ENCODE measurements at regions of chr10 and their contacts with region 1.

Region 1: GRCh38 chr10:35642027-35642792 is at the start of gene FZD8:
- DNase-seq: peak; percentile 53 to 95 (median 89)
- H3K4me3 ChIP-seq: peak within 1 kb of the TSS; percentile 56 to 94 (median 78)
- H3K27ac ChIP-seq: peak within 1 kb of the TSS in 49 of 59 donors; percentile 1 to 85 (median 60)
- H3K27me3 ChIP-seq: no peaks in the 10 kb centered on the region
- CTCF ChIP-seq: peak in 33 of 56 donors; percentile 5 to 57 (median 29)
- total RNA-seq, gene FZD8: 3.4 to 36.8 (median 7.2) TPM

Region 2: DNA sequence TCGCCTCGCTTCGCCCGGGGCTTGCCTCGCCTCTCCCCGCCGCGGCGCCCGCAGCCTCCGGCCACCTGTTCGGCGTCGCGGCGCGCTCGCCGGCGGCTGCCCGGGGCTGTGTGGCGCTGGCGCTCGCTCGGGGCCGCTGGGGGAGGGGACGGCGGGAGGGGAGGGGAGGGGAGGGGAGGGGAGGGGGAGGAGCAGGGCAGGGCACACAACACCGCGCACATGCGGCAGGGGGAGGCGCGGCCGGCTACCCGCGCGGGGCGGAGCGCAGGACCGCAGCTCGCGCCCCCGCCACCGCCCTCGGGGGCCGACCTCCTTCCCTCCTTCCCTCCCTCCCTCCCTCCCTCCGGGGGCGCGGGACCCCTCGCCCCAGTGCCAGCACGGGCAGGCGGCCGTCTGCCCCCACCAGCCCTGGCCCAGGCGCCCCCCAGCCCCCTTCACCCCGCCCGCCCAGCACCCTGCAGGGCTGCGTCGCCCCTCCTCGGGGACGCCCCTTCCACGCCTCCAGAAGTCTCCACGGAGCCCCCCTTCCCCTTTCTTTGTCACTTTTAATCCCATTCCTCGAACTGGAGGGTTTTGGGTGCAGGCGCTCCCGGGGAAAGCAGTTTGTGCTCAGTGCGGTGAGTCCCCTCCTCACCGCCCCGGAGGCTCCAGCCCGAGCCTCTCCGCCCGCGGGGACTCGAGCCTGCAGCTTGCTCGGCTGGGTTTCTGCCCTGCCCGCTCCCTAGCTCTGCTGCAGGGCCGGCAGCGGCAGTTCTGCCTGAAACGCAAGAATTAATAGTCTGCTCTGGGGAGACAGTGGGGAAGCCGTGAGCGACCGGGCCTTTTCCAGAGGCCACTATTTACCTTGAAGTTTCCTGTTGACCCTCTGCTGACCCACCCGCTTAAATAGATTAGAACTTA is 826.8 kb before region 1 on chr10 and contains the start of gene PARD3:
- intact Hi-C with region 1: loop called in 1 of 2 experiments (anchors 5 kb)
- DNase-seq: peak in 1 of 10 donors; percentile 15
- H3K4me3 ChIP-seq: peak within 1 kb of the TSS; percentile 40 to 79 (median 63)
- H3K27ac ChIP-seq: peak within 1 kb of the TSS in 44 of 59 donors; percentile 1 to 87 (median 68)
- H3K27me3 ChIP-seq: peaks cover 0 to 84% (median 27%) of the 10 kb centered on the region in 45 donors
- CTCF ChIP-seq: no peak
- total RNA-seq, gene PARD3: 8.9 to 47.8 (median 19.1) TPM

Region 3: DNA sequence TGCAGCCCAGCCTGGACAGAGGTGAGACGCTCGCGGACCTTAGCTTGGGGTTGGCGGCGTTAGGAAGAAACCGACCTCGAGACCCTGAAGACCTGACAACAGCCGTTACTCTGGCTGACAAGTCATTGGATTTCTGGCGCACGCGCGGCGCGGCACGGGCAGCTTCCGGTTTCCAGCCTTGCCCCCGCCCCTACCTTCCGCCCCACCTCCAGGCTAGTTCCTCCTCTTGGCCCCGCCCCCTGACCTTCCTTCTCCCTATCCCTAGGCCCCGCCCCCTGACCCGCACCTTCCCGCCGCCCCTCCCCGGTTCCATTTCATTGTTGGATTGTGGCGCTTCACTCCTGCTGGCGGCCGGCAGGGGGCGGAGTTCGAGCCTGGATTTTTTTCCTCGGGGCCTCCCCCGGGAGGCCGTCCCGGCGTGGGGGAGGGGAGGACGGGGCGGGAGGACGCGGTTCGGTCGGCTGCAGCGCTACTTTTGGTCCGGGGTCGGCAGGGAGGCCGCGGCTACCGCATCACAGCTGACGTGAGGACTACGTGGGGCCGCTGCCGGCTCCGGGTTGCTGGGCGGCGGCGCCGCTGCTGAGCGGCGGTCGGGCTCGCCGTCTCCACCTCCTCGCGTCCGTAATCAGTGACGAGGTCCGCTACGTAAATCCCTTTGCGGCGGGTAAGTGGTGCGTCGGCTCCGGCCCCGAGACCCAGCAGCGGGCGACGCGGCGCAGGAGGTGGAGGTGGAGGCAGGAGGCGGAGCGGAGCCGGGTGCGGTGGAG is 515.5 kb before region 1 on chr10 and contains the start of gene CREM:
- intact Hi-C with region 1: loop called (anchors 5 to 10 kb)
- DNase-seq: peak; percentile 91 to 98 (median 96)
- H3K4me3 ChIP-seq: peak within 1 kb of the TSS; percentile 65 to 93 (median 86)
- H3K27ac ChIP-seq: peak within 1 kb of the TSS; percentile 88 to 100 (median 98)
- H3K27me3 ChIP-seq: no peaks in the 10 kb centered on the region
- CTCF ChIP-seq: peak; percentile 58 to 96 (median 84)
- total RNA-seq, gene CREM: 20.4 to 57.0 (median 37.2) TPM

Region 4: GRCh38 chr10:35236739-35237138 is 405.5 kb before region 1 on chr10:
- intact Hi-C with region 1: loop called (anchors 10 kb)
- DNase-seq: no peak
- H3K4me3 ChIP-seq: no peak overlapping the region
- H3K27ac ChIP-seq: no peak overlapping the region
- H3K27me3 ChIP-seq: no peaks in the 10 kb centered on the region
- CTCF ChIP-seq: peak in 27 of 56 donors; percentile 12 to 59 (median 27)

Region 5: GRCh38 chr10:35347121-35347562 is 295.1 kb before region 1 on chr10:
- intact Hi-C with region 1: loop called in 1 of 2 experiments (anchors 5 kb)
- DNase-seq: peak in 3 of 10 donors; percentile 31 to 70 (median 53)
- H3K4me3 ChIP-seq: peak overlapping the region in 51 of 59 donors; percentile 1 to 61 (median 36)
- H3K27ac ChIP-seq: peak overlapping the region; percentile 32 to 95 (median 88)
- H3K27me3 ChIP-seq: no peaks in the 10 kb centered on the region
- CTCF ChIP-seq: peak in 4 of 56 donors; percentile 10 to 25 (median 14)

Region 6: GRCh38 chr10:35661236-35661635 is 19.0 kb after region 1 on chr10:
- intact Hi-C with region 1: no loop called
- DNase-seq: no peak
- H3K4me3 ChIP-seq: no peak overlapping the region
- H3K27ac ChIP-seq: no peak overlapping the region
- H3K27me3 ChIP-seq: peaks cover 0 to 4% (median 0%) of the 10 kb centered on the region in 45 donors
- CTCF ChIP-seq: no peak

Region 7: DNA sequence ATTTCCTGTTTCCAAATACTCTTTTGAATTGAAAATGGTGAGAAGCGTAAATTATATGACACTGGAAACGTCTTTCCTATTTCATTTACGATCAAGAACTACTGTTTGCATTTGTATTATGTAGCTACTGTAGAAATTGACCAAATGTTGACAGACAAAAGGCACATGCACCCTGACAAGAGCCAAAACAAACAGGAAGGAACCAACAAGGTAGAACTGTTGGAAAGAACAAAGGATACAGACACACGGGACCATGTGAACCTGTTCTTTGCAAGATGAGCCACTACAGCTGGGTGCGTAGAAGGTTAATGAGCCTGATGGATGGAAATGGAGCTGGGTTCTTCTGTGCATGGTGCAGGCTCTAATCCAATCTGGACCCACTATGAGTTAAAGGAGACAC is 48.3 kb after region 1 on chr10:
- intact Hi-C with region 1: no loop called
- DNase-seq: no peak
- H3K4me3 ChIP-seq: no peak overlapping the region
- H3K27ac ChIP-seq: no peak overlapping the region
- H3K27me3 ChIP-seq: peaks cover 0 to 11% (median 0%) of the 10 kb centered on the region in 45 donors
- CTCF ChIP-seq: no peak

Region 8: DNA sequence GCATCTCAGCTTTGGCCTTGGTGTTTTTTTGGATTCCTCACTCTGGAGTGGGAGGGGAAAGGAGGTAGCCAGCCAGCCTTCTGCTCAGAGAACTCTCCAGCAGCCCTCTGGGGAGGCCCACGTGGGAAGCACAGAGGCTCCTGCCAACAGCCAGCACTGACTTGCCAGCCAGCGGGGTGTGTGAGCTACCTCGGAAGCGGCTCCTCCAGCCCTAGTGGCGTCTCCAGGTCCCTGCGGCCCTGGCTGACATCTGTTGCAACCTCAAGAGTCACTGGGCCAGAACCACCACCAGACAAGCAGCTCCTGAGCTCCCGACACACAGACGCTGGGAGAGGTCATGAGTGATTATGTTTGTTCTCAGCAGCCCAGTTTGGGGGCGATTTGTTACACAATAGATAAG is 180.1 kb after region 1 on chr10:
- intact Hi-C with region 1: loop called in 1 of 2 experiments (anchors 10 kb)
- DNase-seq: peak; percentile 32 to 85 (median 72)
- H3K4me3 ChIP-seq: no peak overlapping the region
- H3K27ac ChIP-seq: peak overlapping the region in 1 of 59 donors; percentile 24
- H3K27me3 ChIP-seq: no peaks in the 10 kb centered on the region
- CTCF ChIP-seq: peak in 18 of 56 donors; percentile 6 to 30 (median 20)

Region 9: DNA sequence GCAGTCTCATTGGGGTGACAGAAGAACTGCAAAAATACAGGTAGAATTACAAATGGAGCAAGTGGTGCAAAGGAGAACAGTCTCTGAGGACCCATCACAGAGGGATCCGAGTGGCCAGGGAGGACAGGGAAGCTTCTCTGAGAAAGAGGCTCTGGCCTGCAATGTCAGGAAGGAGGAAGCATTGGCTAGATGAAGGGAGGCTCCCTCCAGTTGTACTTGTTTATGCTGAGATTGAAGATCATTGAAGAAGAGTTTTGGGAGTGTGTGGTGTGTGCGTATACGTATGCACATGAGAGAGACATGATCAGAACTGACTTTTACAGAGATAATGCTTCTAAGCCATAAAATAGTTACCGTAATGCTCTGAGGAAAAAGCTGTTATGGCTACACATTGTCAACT is 274.6 kb after region 1 on chr10:
- intact Hi-C with region 1: loop called (anchors 2 to 5 kb)
- DNase-seq: no peak
- H3K4me3 ChIP-seq: no peak overlapping the region
- H3K27ac ChIP-seq: no peak overlapping the region
- H3K27me3 ChIP-seq: peaks cover 0 to 8% (median 0%) of the 10 kb centered on the region in 45 donors
- CTCF ChIP-seq: peak in 9 of 56 donors; percentile 11 to 59 (median 20)